Ovary (tissue), 10 donors: ENCODE measurements at regions of chr10 and their contacts with region 1.

Region 1: GRCh38 chr10:64501807-64502206 is 980.6 kb downstream of the REEP3 start:
- DNase-seq: no peak
- H3K4me3 ChIP-seq: no peak overlapping the region
- H3K27ac ChIP-seq: no peak overlapping the region
- H3K4me1 ChIP-seq: no peaks in the 10 kb centered on the region
- H3K27me3 ChIP-seq: no peaks in the 10 kb centered on the region
- CTCF ChIP-seq: no peak
- EP300 ChIP-seq: no peak
- POLR2A ChIP-seq: no peak

Region 2: GRCh38 chr10:64468219-64468618 is 33.6 kb before region 1 on chr10:
- intact Hi-C with region 1: loop called in 1 of 4 experiments (anchors 1 kb)
- DNase-seq: no peak
- H3K4me3 ChIP-seq: no peak overlapping the region
- H3K27ac ChIP-seq: no peak overlapping the region
- H3K4me1 ChIP-seq: no peaks in the 10 kb centered on the region
- H3K27me3 ChIP-seq: no peaks in the 10 kb centered on the region
- CTCF ChIP-seq: no peak
- EP300 ChIP-seq: no peak
- POLR2A ChIP-seq: no peak